Panc1 (cell line): ENCODE measurements at regions of chr6 and their contacts with region 1.

Region 1: GRCh38 chr6:26103770-26104456 is 16.7 kb downstream of the HFE start:
- DNase-seq: peak; percentile 98
- ATAC-seq: peak; percentile 89
- H3K4me3 ChIP-seq: peak overlapping the region; percentile 58 to 79
- H3K27ac ChIP-seq: peak overlapping the region; percentile 99
- H3K4me1 ChIP-seq: peaks cover 16% of the 10 kb centered on the region
- H3K27me3 ChIP-seq: no peaks in the 10 kb centered on the region
- CTCF ChIP-seq: peak; percentile 62

Region 2: GRCh38 chr6:26031595-26032339 is 72.1 kb before region 1 on chr6:
- CTCF ChIA-PET with region 1: no interaction called
- POLR2A ChIA-PET with region 1: no interaction called
- in situ Hi-C with region 1: no loop called
- intact Hi-C with region 1: no loop called
- DNase-seq: peak; percentile 98
- ATAC-seq: peak; percentile 77
- H3K4me3 ChIP-seq: peak overlapping the region; percentile 84 to 91
- H3K27ac ChIP-seq: peak overlapping the region; percentile 100
- H3K4me1 ChIP-seq: peaks cover 42% of the 10 kb centered on the region
- H3K27me3 ChIP-seq: no peaks in the 10 kb centered on the region
- CTCF ChIP-seq: no peak; the same call in 1 of the 2 replicates

Region 3: DNA sequence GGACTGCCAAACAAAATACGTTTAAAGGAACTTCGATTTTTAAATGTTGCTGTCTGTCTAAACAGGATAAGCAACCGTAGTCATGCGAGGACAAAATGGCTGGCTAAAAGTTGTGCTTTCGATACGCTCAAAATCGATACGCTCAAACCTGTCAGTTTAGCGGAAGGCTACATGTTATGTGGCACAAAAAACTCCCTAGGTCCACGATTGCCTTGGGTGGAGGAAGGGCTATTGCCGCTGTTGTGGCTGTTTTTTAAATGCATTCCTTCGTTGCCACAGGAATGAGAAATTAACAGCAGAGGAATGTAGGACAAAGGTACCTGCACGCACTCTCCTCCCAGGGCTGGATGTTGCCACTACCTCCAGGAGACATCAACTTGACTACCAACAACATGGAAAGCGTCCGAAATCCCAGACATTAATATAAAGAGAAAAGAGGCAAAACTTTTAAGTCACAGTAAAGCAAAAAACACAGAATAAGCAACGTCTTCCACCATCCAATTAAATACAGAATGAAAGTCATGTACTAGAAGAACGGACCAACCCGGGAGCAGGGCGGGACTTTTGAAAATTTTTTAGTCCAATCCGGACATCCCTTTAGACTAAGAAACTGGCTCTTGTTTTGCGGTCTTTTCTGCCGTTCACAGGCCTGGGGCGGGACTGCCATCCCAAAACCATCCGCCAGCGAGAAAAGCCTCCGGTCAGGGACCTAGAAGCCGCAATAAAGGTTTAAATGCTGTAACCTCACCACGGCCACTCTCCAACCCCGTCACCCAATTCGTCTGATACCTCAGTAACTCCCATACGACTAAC is 48.9 kb before region 1 on chr6:
- CTCF ChIA-PET with region 1: no interaction called
- POLR2A ChIA-PET with region 1: interaction called, 7 read pairs
- in situ Hi-C with region 1: loop called (anchors 5 kb)
- intact Hi-C with region 1: loop called (anchors 2 kb)
- DNase-seq: no peak
- ATAC-seq: peak; percentile 81
- H3K4me3 ChIP-seq: peak overlapping the region; percentile 80 to 92
- H3K27ac ChIP-seq: peak overlapping the region; percentile 100
- H3K4me1 ChIP-seq: peaks cover 18% of the 10 kb centered on the region
- H3K27me3 ChIP-seq: no peaks in the 10 kb centered on the region
- CTCF ChIP-seq: no peak